CD8-positive, alpha-beta T cell (primary cell): ENCODE measurements at regions of chr20 and their contacts with region 1.

Region 1: GRCh38 chr20:24389686-24390085 is 79.7 kb upstream of the SYNDIG1 start:
- DNase-seq: peak in 8 of 9 experiments; percentile 21 to 72 (median 44)
- ATAC-seq: peak; percentile 99
- H3K4me3 ChIP-seq: no peak overlapping the region
- H3K4me3 Mint-ChIP-seq: peak overlapping the region; percentile 65
- H3K27ac ChIP-seq: no peak overlapping the region
- H3K27ac Mint-ChIP-seq: peak overlapping the region; percentile 89
- H3K4me1 ChIP-seq: peaks cover 25% of the 10 kb centered on the region
- H3K4me1 Mint-ChIP-seq: peaks cover 41% of the 10 kb centered on the region
- H3K27me3 ChIP-seq: no peaks in the 10 kb centered on the region
- H3K27me3 Mint-ChIP-seq: no peaks in the 10 kb centered on the region
- CTCF ChIP-seq: no peak

Region 2: GRCh38 chr20:24337069-24337468 is 52.6 kb before region 1 on chr20:
- CTCF ChIA-PET with region 1: no interaction called
- POLR2A ChIA-PET with region 1: no interaction called
- intact Hi-C with region 1: loop called in 1 of 2 experiments (anchors 10 kb)
- DNase-seq: no peak
- ATAC-seq: no peak
- H3K4me3 ChIP-seq: no peak overlapping the region
- H3K4me3 Mint-ChIP-seq: no peak overlapping the region
- H3K27ac ChIP-seq: no peak overlapping the region
- H3K27ac Mint-ChIP-seq: no peak overlapping the region
- H3K4me1 ChIP-seq: no peaks in the 10 kb centered on the region
- H3K4me1 Mint-ChIP-seq: peaks cover 11% of the 10 kb centered on the region
- H3K27me3 ChIP-seq: no peaks in the 10 kb centered on the region
- H3K27me3 Mint-ChIP-seq: peaks cover 2% of the 10 kb centered on the region
- CTCF ChIP-seq: no peak

Region 3: GRCh38 chr20:24432046-24432442 is 42.4 kb after region 1 on chr20:
- CTCF ChIA-PET with region 1: no interaction called
- POLR2A ChIA-PET with region 1: no interaction called
- intact Hi-C with region 1: loop called in 1 of 2 experiments (anchors 1 kb)
- DNase-seq: no peak
- ATAC-seq: no peak
- H3K4me3 ChIP-seq: no peak overlapping the region
- H3K4me3 Mint-ChIP-seq: no peak overlapping the region
- H3K27ac ChIP-seq: no peak overlapping the region
- H3K27ac Mint-ChIP-seq: no peak overlapping the region
- H3K4me1 ChIP-seq: no peaks in the 10 kb centered on the region
- H3K4me1 Mint-ChIP-seq: no peaks in the 10 kb centered on the region
- H3K27me3 ChIP-seq: peaks cover 0 to 5% of the 10 kb centered on the region in 2 experiments
- H3K27me3 Mint-ChIP-seq: no peaks in the 10 kb centered on the region
- CTCF ChIP-seq: no peak

Region 4: GRCh38 chr20:24445510-24446170 is 56.0 kb after region 1 on chr20:
- CTCF ChIA-PET with region 1: no interaction called
- POLR2A ChIA-PET with region 1: no interaction called
- intact Hi-C with region 1: loop called in 1 of 2 experiments (anchors 10 kb)
- DNase-seq: no peak
- ATAC-seq: no peak
- H3K4me3 ChIP-seq: no peak overlapping the region
- H3K4me3 Mint-ChIP-seq: no peak overlapping the region
- H3K27ac ChIP-seq: no peak overlapping the region
- H3K27ac Mint-ChIP-seq: no peak overlapping the region
- H3K4me1 ChIP-seq: no peaks in the 10 kb centered on the region
- H3K4me1 Mint-ChIP-seq: peaks cover 6% of the 10 kb centered on the region
- H3K27me3 ChIP-seq: no peaks in the 10 kb centered on the region
- H3K27me3 Mint-ChIP-seq: no peaks in the 10 kb centered on the region
- CTCF ChIP-seq: no peak

Region 5: GRCh38 chr20:24838546-24839535 is 449.2 kb after region 1 on chr20:
- CTCF ChIA-PET with region 1: no interaction called
- POLR2A ChIA-PET with region 1: no interaction called
- intact Hi-C with region 1: no loop called
- DNase-seq: no peak
- ATAC-seq: no peak
- H3K4me3 ChIP-seq: no peak overlapping the region
- H3K4me3 Mint-ChIP-seq: no peak overlapping the region
- H3K27ac ChIP-seq: no peak overlapping the region
- H3K27ac Mint-ChIP-seq: no peak overlapping the region
- H3K4me1 ChIP-seq: no peaks in the 10 kb centered on the region
- H3K4me1 Mint-ChIP-seq: no peaks in the 10 kb centered on the region
- H3K27me3 ChIP-seq: no peaks in the 10 kb centered on the region
- H3K27me3 Mint-ChIP-seq: peaks cover 12% of the 10 kb centered on the region
- CTCF ChIP-seq: no peak